Activated CD8-positive, alpha-beta T cell treated with anti-CD3 and anti-CD28 coated beads for 36 hours (primary cell): ENCODE measurements at regions of chr20 and their contacts with region 1.

Region 1: DNA sequence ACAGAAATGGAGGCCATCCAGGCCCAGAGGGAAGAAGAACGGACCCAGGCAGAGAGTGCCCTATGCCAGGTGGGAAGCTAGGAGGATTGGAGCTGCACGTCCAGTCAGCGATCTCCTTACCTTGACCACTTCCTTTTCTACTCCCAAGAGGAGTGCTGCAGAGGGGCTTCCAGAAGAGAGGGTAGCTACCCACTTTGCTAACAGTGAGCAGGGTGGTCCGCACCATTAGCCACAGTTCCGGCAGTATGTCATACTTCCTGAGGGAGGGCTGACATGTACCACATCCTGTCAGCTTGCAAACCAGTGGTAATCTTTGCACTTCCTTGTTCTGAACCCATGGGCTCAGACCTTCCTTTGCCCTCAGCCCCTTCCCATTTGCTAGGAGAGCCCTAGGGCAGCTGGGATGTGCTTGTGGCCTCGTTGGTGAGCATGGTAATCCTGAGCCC is 35.4 kb downstream of the CEP250 start:
- DNase-seq: peak; percentile 80
- ATAC-seq: peak; percentile 97
- H3K4me3 Mint-ChIP-seq: peak overlapping the region; percentile 100
- H3K27ac Mint-ChIP-seq: peak overlapping the region; percentile 100
- H3K4me1 Mint-ChIP-seq: peaks cover 44% of the 10 kb centered on the region
- H3K27me3 Mint-ChIP-seq: no peaks in the 10 kb centered on the region
- CTCF ChIP-seq: no peak

Region 2: DNA sequence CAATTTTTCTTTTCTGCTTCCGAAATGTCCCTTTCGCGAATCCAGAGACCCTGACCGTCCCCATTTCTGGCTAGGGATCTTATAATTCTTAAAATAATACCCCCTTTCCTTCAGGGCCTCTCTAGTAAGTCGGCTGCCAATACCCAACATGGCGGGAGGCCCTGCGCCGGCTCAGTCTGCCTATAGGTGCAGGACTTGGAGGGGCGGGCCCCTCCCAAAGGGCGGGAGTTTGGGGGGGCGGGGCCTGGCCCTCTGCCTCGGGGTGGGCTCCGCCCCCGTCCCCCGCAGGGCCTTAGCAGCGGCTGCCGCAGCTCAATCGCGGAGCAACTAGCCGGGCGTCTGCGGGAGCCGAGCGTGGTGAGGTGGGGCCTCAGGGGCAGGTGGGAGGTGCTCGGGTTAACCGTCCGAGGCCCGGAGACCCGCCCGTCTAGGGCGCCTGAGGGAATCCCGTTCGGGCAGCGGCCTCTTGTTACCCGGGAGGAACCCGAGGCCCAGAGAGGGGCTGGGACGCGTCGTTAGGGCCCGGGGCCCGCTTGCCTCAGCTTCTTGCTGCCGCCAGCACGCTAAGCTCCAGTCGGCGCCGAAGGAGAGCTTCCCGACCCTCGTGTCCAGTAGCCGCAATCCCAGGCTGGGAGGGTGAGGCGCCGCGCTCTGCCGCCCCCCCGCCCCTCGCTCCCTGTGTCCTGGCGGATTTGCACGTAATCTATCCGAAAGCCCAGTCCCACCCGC is 35.7 kb before region 1 on chr20 and contains the start of gene CEP250:
- CTCF ChIA-PET with region 1: no interaction called
- POLR2A ChIA-PET with region 1: interaction called, 19 read pairs
- intact Hi-C with region 1: no loop called
- DNase-seq: peak; percentile 96
- ATAC-seq: peak; percentile 99
- H3K4me3 Mint-ChIP-seq: peak within 1 kb of the TSS; percentile 90
- H3K27ac Mint-ChIP-seq: peak within 1 kb of the TSS; percentile 99
- H3K4me1 Mint-ChIP-seq: peaks cover 21% of the 10 kb centered on the region
- H3K27me3 Mint-ChIP-seq: no peaks in the 10 kb centered on the region
- CTCF ChIP-seq: no peak
- total RNA-seq, gene CEP250: 56.0 to 60.3 TPM

Region 3: DNA sequence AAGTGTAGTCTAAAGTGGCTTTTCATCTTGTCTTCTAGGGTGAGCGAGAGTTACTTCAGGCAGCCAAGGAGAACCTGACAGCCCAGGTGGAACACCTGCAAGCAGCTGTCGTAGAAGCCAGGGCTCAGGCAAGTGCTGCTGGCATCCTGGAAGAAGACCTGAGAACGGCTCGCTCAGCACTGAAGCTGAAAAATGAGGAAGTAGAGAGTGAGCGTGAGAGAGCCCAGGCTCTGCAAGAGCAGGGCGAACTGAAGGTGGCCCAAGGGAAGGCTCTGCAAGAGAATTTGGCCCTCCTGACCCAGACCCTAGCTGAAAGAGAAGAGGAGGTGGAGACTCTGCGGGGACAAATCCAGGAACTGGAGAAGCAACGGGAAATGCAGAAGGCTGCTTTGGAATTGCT is 11.6 kb after region 1 on chr20:
- CTCF ChIA-PET with region 1: interaction called, 7 read pairs
- POLR2A ChIA-PET with region 1: interaction called, 13 read pairs
- intact Hi-C with region 1: no loop called
- DNase-seq: no peak
- ATAC-seq: no peak
- H3K4me3 Mint-ChIP-seq: no peak overlapping the region
- H3K27ac Mint-ChIP-seq: no peak overlapping the region
- H3K4me1 Mint-ChIP-seq: peaks cover 23% of the 10 kb centered on the region
- H3K27me3 Mint-ChIP-seq: no peaks in the 10 kb centered on the region
- CTCF ChIP-seq: no peak